ENCODE measurements at regions of chr21 and their contacts with region 1.

Region 1: DNA sequence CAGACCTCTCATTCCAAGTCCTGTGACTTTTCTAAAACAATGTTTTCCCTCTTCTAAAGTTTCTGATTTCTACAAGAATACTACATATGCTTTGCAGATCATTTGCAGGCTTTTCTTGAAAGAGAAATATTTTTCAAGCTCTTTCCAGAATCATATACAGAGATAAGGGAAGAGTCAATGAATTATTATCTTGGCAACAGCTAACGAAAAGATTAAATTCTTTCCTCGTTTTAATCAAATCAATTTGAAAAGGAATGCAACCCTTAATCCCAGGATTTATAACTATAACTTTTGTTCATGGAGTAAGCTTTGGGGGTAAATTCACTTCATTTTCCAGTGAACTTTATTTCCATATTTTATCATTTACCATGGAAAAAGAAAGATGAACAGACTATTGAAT is 6.9 kb downstream of the KRTAP11-1 start:
- DNase-seq: no peak
- ATAC-seq: no peak
- H3K4me3 ChIP-seq: no peak overlapping the region
- H3K4me3 Mint-ChIP-seq: no peak overlapping the region
- H3K27ac ChIP-seq: no peak overlapping the region
- H3K27ac Mint-ChIP-seq: no peak overlapping the region
- H3K4me1 ChIP-seq: no peaks in the 10 kb centered on the region
- H3K4me1 Mint-ChIP-seq: no peaks in the 10 kb centered on the region
- H3K27me3 ChIP-seq: peaks cover 0 to 4% of the 10 kb centered on the region in 2 donors
- H3K27me3 Mint-ChIP-seq: peaks cover 0 to 31% (median 15%) of the 10 kb centered on the region in 5 donors

Region 2: GRCh38 chr21:30800605-30801004 is 73.9 kb before region 1 on chr21:
- CTCF ChIA-PET with region 1: no interaction called
- POLR2A ChIA-PET with region 1: no interaction called
- intact Hi-C with region 1: loop called in 1 of 2 experiments (anchors 10 kb)
- DNase-seq: no peak
- ATAC-seq: no peak
- H3K4me3 ChIP-seq: no peak overlapping the region
- H3K4me3 Mint-ChIP-seq: no peak overlapping the region
- H3K27ac ChIP-seq: no peak overlapping the region
- H3K27ac Mint-ChIP-seq: no peak overlapping the region
- H3K4me1 ChIP-seq: no peaks in the 10 kb centered on the region
- H3K4me1 Mint-ChIP-seq: no peaks in the 10 kb centered on the region
- H3K27me3 ChIP-seq: no peaks in the 10 kb centered on the region
- H3K27me3 Mint-ChIP-seq: peaks cover 0 to 15% (median 4%) of the 10 kb centered on the region in 5 donors

Region 3: DNA sequence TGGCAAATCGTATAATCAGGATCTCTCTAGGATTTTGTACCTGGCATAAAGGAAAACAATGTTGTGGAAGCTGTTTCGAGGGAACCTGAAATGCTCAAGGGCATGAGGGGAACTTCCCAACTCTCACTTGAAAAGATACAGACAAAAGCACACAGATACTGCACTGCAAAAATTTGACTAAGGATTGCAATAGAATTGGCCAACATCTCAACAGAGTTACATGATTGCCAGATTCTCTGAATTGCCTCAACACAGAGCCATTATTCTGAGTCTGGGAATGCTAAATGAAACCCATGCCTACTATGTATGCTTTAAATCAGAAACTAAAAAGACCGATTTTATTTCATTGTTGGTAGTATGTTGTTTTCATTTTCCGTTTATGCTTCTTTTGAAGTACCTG is 147.8 kb after region 1 on chr21:
- CTCF ChIA-PET with region 1: no interaction called
- POLR2A ChIA-PET with region 1: no interaction called
- intact Hi-C with region 1: no loop called
- DNase-seq: no peak
- ATAC-seq: no peak
- H3K4me3 ChIP-seq: no peak overlapping the region
- H3K4me3 Mint-ChIP-seq: no peak overlapping the region
- H3K27ac ChIP-seq: no peak overlapping the region
- H3K27ac Mint-ChIP-seq: no peak overlapping the region
- H3K4me1 ChIP-seq: no peaks in the 10 kb centered on the region
- H3K4me1 Mint-ChIP-seq: peaks cover 0 to 2% (median 0%) of the 10 kb centered on the region in 7 donors
- H3K27me3 ChIP-seq: no peaks in the 10 kb centered on the region
- H3K27me3 Mint-ChIP-seq: peaks cover 9 to 34% (median 28%) of the 10 kb centered on the region in 5 donors

Region 4: GRCh38 chr21:31180256-31181081 is 305.9 kb after region 1 on chr21:
- CTCF ChIA-PET with region 1: no interaction called
- POLR2A ChIA-PET with region 1: no interaction called
- intact Hi-C with region 1: no loop called
- DNase-seq: peak in 6 of 9 donors; percentile 33 to 65 (median 50)
- ATAC-seq: peak; percentile 30
- H3K4me3 ChIP-seq: peak overlapping the region; percentile 46
- H3K4me3 Mint-ChIP-seq: peak overlapping the region; percentile 82 to 100 (median 87)
- H3K27ac ChIP-seq: peak overlapping the region; percentile 79
- H3K27ac Mint-ChIP-seq: peak overlapping the region; percentile 96 to 100 (median 99)
- H3K4me1 ChIP-seq: peaks cover 12 to 73% of the 10 kb centered on the region in 2 donors
- H3K4me1 Mint-ChIP-seq: peaks cover 44 to 92% (median 72%) of the 10 kb centered on the region in 7 donors
- H3K27me3 ChIP-seq: no peaks in the 10 kb centered on the region
- H3K27me3 Mint-ChIP-seq: no peaks in the 10 kb centered on the region

Measured in naive thymus-derived CD4-positive, alpha-beta T cell (primary cell).